Transverse colon (tissue), 4 donors: ENCODE measurements at regions of chrX and their contacts with region 1.

Region 1: GRCh38 chrX:137187540-137187939 is 153.7 kb upstream of the GPR101 start:
- DNase-seq: no peak
- H3K4me3 ChIP-seq: no peak overlapping the region
- H3K27ac ChIP-seq: no peak overlapping the region
- H3K4me1 ChIP-seq: no peaks in the 10 kb centered on the region
- H3K27me3 ChIP-seq: no peaks in the 10 kb centered on the region
- CTCF ChIP-seq: no peak
- EP300 ChIP-seq: no peak
- POLR2A ChIP-seq: no peak

Region 2: DNA sequence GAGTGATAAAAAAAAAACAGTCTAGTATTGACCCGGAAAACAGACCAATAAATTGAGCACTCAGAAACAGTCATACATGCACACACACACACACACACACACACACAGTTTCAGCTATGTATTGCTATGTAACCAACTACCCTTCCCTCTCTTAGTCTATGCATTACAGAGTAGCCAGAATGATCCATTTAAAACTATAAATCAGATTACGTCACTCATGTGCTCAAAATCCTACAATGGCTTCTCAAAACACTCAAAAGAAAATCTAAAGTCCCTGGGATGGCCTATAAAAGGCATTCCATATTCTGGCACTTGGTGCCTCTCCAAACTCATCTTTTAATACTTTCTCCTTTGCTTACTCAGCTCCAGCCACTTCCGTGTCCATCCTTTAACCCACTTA is 331.9 kb after region 1 on chrX:
- in situ Hi-C with region 1: no loop called
- intact Hi-C with region 1: loop called (anchors 5 kb)
- DNase-seq: no peak
- H3K4me3 ChIP-seq: no peak overlapping the region
- H3K27ac ChIP-seq: no peak overlapping the region
- H3K4me1 ChIP-seq: no peaks in the 10 kb centered on the region
- H3K27me3 ChIP-seq: no peaks in the 10 kb centered on the region
- CTCF ChIP-seq: no peak
- EP300 ChIP-seq: no peak
- POLR2A ChIP-seq: no peak